IMR-90 (cell line): ENCODE measurements at regions of chr1 and their contacts with region 1.

Region 1: DNA sequence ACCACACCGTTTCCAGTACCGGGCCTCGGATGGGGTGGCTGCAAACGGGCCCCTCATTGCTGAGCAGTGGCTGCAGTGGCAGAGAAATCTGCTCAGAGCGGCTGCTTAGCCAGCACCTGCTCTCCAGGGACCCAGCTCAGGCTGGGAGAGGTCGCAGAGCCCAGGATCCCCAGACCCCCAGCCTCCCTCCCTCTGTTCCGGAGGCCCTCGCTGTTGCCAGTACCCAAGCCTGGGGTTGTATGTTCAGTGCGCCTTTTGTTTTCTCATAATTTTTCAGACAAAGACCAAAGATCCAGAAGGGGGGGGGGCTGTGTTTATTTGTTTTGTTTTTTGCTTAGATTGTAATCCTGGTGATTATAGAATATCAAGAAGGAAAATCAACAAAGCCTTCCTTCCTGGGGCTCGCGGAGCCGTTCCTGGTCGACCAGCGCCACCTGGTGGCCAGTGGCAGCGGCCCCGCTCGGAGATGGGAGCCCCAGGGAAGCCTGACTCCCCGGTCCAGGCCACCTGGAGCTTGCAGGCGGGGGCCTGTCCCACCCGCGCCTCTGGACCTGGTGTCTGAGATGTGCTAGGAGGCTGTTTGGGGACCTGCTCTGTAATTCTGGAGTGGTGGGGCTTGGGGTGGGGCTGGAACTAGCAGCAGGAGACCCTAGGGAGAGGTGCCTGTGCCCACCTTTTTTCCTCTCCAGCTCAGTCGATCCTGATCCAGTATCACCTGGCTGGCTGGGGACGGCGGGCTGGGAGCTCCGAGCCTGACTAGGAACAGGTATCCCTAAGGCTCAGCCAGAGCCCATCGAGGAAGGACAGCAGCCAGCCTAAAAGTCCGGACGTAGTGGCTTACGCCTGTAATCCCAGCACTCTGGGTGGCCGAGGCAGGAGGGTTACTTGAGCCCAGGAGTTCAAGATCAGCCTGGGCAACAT is 123.9 kb upstream of the VAMP3 start:
- DNase-seq: peak; percentile 46
- ATAC-seq: peak; percentile 63
- H3K4me3 ChIP-seq: no peak overlapping the region
- H3K27ac ChIP-seq: no peak overlapping the region
- H3K4me1 ChIP-seq: peaks cover 8% of the 10 kb centered on the region; the same call in 1 of the 2 replicates
- H3K27me3 ChIP-seq: peaks cover 22% of the 10 kb centered on the region; the same call in 1 of the 2 replicates
- CTCF ChIP-seq: peak; percentile 95
- POLR2A ChIP-seq: no peak
- RAD21 ChIP-seq: peak; percentile 98

Region 2: DNA sequence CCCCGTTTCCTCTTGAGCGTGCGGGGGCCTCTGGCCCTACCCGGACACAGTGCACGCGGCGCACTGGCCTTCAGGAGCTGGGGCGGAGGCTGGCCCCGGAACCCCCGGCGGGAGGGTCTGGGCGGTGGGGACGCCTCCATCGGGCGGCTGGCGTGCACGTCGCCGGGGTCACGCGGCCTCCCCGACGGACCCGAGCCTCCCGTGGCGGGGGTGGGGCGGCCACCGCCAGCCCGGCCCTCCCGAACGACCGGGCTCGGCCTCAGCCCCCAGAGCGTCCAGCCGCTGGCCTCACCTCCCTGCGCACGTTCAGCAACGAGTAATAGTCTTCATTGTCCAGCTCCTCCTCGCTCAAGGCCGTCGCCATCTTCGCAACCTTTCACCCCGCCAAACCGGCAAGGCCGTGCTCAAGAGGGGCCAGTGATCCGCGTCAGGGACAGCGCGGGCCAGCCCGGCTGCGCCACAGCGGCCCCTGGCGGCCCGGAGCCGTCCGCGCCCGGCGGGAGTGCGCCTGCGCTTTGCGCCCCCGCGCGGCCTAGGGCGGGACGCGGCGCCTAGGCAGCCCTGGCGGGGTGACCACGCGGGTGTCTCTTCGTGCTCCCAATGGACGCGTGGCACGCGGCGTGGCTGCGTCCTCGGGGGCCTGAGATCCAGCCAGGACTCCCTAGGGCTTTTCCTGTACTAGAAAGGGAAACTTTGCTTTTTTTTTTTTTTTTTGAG is 945.6 kb before region 1 on chr1 and contains the start of gene DNAJC11:
- CTCF ChIA-PET with region 1: no interaction called
- POLR2A ChIA-PET with region 1: no interaction called
- dilution Hi-C with region 1: no loop called
- in situ Hi-C with region 1: no loop called
- intact Hi-C with region 1: loop called (anchors 10 kb)
- DNase-seq: peak; percentile 87
- ATAC-seq: peak; percentile 99
- H3K4me3 ChIP-seq: peak within 1 kb of the TSS; percentile 77
- H3K27ac ChIP-seq: peak within 1 kb of the TSS; percentile 76
- H3K4me1 ChIP-seq: peaks cover 5% of the 10 kb centered on the region; the same call in 1 of the 2 replicates
- H3K27me3 ChIP-seq: 0 out of 2 replicates have a peak, but pooled peaks cover 1% of the 10 kb centered on the region
- CTCF ChIP-seq: peak; percentile 99; the same call in 1 of the 2 replicates
- POLR2A ChIP-seq: peak; percentile 82
- RAD21 ChIP-seq: no peak; the same call in 1 of the 2 replicates
- total RNA-seq, gene DNAJC11: 38.7 and 41.7 TPM in 2 replicates

Region 3: GRCh38 chr1:6794164-6794563 is 853.1 kb before region 1 on chr1:
- CTCF ChIA-PET with region 1: no interaction called
- POLR2A ChIA-PET with region 1: no interaction called
- dilution Hi-C with region 1: no loop called
- in situ Hi-C with region 1: no loop called
- intact Hi-C with region 1: loop called (anchors 1 kb)
- DNase-seq: peak; percentile 74
- ATAC-seq: 0 out of 2 replicates have a peak, but pooled peaks have one; percentile 36
- H3K4me3 ChIP-seq: no peak overlapping the region
- H3K27ac ChIP-seq: no peak overlapping the region
- H3K4me1 ChIP-seq: peaks cover 12% of the 10 kb centered on the region
- H3K27me3 ChIP-seq: no peaks in the 10 kb centered on the region
- CTCF ChIP-seq: peak; percentile 65
- POLR2A ChIP-seq: no peak
- RAD21 ChIP-seq: peak; percentile 68

Region 4: DNA sequence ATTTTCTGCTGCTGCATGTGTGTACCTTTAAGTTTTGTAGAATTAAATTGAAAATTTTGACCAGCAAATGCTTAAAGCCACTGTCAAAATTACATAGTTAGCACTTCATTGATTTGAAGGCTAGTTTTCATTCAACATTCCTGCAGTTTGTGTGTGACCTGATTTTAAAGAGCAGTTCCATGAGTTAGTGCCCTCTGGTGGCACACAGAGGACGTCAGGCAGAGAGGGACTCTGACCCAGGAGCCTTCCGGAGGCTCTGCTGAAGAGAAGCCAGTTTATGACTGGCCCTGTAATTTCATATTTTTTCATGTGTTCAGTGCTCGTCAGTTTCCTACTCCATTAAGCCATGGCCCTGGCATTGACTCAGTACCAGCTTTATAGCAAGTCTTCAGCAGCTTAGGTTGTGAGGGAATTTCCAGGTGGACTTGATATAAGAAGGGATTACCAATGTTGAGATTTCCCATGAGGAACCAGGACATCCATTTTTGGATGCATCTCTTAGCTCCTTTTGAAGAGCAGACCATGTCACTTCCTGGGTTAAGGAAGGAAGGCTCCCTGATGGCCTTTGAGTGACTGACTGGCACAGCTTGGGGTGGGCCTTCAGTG is 757.3 kb before region 1 on chr1:
- CTCF ChIA-PET with region 1: interaction called, 3 read pairs
- POLR2A ChIA-PET with region 1: no interaction called
- dilution Hi-C with region 1: no loop called
- in situ Hi-C with region 1: no loop called
- intact Hi-C with region 1: loop called (anchors 1 kb)
- DNase-seq: peak; percentile 68
- ATAC-seq: peak; percentile 87
- H3K4me3 ChIP-seq: no peak overlapping the region
- H3K27ac ChIP-seq: no peak overlapping the region
- H3K4me1 ChIP-seq: peaks cover 4% of the 10 kb centered on the region
- H3K27me3 ChIP-seq: no peaks in the 10 kb centered on the region
- CTCF ChIP-seq: peak; percentile 77
- POLR2A ChIP-seq: no peak
- RAD21 ChIP-seq: peak; percentile 80

Region 5: GRCh38 chr1:7070389-7071029 is 576.7 kb before region 1 on chr1:
- CTCF ChIA-PET with region 1: no interaction called
- POLR2A ChIA-PET with region 1: no interaction called
- dilution Hi-C with region 1: no loop called
- in situ Hi-C with region 1: no loop called
- intact Hi-C with region 1: loop called (anchors 1 kb)
- DNase-seq: peak; percentile 72
- ATAC-seq: peak; percentile 94
- H3K4me3 ChIP-seq: peak overlapping the region; percentile 19
- H3K27ac ChIP-seq: no peak overlapping the region
- H3K4me1 ChIP-seq: no peaks in the 10 kb centered on the region
- H3K27me3 ChIP-seq: peaks cover 11% of the 10 kb centered on the region
- CTCF ChIP-seq: peak; percentile 81
- POLR2A ChIP-seq: no peak
- RAD21 ChIP-seq: peak; percentile 76

Region 6: DNA sequence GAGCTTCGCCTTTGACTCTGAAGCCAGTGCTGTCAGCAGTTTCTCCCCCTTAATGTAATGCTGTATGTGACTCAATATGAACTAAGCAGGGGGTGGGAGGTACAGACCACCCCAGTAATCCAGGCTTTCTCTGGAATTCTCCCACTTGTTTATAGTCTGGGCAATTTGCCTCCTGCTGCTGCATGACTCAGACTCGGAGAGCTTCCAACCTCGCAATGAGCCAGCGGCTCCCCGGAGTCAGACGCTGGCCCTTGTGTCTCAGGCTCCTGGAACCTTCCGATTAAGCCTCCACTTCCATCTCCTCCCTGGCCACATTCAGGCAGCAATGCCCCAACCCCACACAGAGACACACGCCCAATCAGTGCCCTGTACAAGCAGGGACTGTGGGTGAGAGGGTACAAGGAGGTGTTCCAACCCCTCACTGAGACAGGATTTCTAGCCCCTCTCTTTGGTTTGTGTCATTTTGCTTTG is 347.9 kb before region 1 on chr1:
- CTCF ChIA-PET with region 1: no interaction called
- POLR2A ChIA-PET with region 1: no interaction called
- dilution Hi-C with region 1: no loop called
- in situ Hi-C with region 1: no loop called
- intact Hi-C with region 1: loop called (anchors 10 kb)
- DNase-seq: peak; percentile 100
- ATAC-seq: peak; percentile 82
- H3K4me3 ChIP-seq: peak overlapping the region; percentile 12; the same call in 1 of the 2 replicates
- H3K27ac ChIP-seq: peak overlapping the region; percentile 90
- H3K4me1 ChIP-seq: peaks cover 18% of the 10 kb centered on the region
- H3K27me3 ChIP-seq: no peaks in the 10 kb centered on the region
- CTCF ChIP-seq: no peak
- POLR2A ChIP-seq: peak; percentile 60; the same call in 1 of the 2 replicates
- RAD21 ChIP-seq: peak; percentile 40

Region 7: DNA sequence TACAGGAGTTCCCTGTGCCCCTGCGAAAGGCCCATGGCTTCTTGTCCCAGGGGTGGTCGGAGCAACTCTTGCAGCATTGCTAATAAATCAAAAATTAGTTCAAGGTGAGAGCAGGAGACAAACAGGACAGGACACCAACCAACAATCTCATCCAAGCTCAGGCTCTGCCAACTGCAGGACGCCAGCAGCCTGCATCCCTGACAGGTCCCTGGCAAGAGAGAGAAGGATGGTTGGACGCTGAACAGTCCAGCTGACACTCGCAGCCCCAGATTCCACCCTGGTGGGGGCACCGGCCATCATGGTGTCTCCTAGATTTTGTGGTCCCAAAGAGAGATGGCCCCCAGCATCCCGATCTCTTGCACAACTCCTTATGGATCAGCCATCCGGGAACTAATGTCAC is 18.2 kb before region 1 on chr1:
- CTCF ChIA-PET with region 1: no interaction called
- POLR2A ChIA-PET with region 1: no interaction called
- dilution Hi-C with region 1: no loop called
- in situ Hi-C with region 1: no loop called
- intact Hi-C with region 1: no loop called
- DNase-seq: no peak
- ATAC-seq: no peak
- H3K4me3 ChIP-seq: no peak overlapping the region
- H3K27ac ChIP-seq: no peak overlapping the region
- H3K4me1 ChIP-seq: no peaks in the 10 kb centered on the region
- H3K27me3 ChIP-seq: peaks cover 70% of the 10 kb centered on the region
- CTCF ChIP-seq: no peak
- POLR2A ChIP-seq: no peak
- RAD21 ChIP-seq: no peak

Region 8: DNA sequence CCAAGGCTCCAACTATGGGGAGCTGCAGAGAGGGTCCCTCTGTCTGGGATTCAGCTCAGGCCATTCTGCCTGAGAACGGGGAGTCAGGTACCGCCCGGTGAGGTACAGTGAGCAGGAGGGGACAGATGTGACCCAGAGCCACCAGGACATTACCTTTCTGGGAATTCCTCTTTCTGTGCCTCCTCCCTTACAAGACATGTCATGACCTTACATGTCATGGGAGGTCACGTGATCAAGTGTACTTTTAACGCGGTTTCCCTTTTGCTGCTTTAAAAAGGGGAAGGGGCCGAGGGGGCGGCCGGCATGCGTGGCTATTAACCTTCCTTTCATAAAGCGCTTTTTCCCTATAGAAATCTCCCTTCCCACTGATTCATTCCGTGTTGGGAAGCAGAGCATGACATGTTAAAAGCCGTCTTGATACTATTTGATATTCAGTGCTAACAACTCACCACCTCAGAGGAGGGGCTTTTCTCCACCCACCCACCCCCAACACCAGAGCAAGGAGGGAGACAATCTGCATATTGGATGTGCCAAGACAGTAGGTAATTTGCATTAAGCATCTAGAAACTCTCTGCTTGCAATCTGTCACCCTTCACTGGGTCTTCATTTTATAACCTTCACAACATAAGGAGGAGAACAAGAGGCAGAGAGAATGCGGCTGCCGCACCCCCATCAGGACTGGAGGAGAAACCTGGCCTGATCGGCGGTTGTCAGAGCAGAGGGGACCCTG is 10.2 kb after region 1 on chr1:
- CTCF ChIA-PET with region 1: no interaction called
- POLR2A ChIA-PET with region 1: no interaction called
- dilution Hi-C with region 1: no loop called
- in situ Hi-C with region 1: no loop called
- intact Hi-C with region 1: no loop called
- DNase-seq: no peak
- ATAC-seq: no peak
- H3K4me3 ChIP-seq: no peak overlapping the region
- H3K27ac ChIP-seq: no peak overlapping the region
- H3K4me1 ChIP-seq: no peaks in the 10 kb centered on the region
- H3K27me3 ChIP-seq: peaks cover 22% of the 10 kb centered on the region
- CTCF ChIP-seq: no peak
- POLR2A ChIP-seq: no peak
- RAD21 ChIP-seq: no peak